ENCODE measurements at regions of chr9 and their contacts with region 1.

Region 1: DNA sequence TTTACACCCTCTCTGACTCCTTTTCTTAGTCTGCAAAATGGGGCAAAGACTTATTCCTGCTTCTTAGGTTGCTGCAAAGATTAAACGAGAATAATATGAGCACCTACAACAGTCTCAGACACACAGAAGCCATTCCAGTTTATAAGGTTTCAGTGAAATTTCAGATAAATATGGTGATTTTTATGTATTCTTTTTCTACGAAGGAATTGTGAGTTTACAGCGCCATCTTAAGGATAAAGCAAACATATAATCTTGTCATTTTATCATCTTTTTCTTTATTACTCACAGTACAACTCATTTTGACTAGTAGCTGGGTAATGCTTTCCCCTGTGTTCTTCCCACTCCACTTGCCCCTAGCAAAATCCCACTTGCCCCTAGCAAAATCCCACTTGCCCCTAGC is 29.2 kb upstream of the SMC5 start:
- DNase-seq: no peak
- H3K4me3 ChIP-seq: no peak overlapping the region
- H3K27ac ChIP-seq: no peak overlapping the region; a peak in 1 of 4 replicates
- H3K4me1 ChIP-seq: no peaks in the 10 kb centered on the region
- H3K27me3 ChIP-seq: no peaks in the 10 kb centered on the region
- CTCF ChIP-seq: peak; percentile 67
- EP300 ChIP-seq: no peak
- RAD21 ChIP-seq: peak; percentile 70

Region 2: DNA sequence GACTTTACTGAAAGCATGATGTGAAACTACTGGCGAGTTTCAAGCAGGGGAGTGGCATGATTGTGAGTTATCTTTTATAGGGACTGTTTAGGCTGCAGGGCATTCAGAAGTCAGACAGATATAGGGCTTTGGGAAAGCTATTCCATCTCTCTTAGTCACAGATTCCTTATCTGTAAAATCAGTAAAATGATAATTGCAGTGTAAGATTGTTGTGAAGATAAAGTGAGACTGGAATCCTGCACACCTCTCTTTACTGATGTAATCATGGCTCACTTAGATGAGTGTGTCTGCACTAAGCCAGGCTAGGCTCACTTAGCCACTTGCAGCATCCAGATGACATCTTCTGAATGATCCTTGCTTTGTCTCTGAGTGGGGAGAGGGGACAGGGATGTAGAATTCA is 267.7 kb before region 1 on chr9:
- CTCF ChIA-PET with region 1: interaction called, 10 read pairs
- POLR2A ChIA-PET with region 1: no interaction called
- DNase-seq: peak; percentile 13
- H3K4me3 ChIP-seq: no peak overlapping the region
- H3K27ac ChIP-seq: no peak overlapping the region
- H3K4me1 ChIP-seq: peaks cover 0 to 6% of the 10 kb centered on the region in 2 experiments; a peak in 2 of 4 replicates
- H3K27me3 ChIP-seq: no peaks in the 10 kb centered on the region
- CTCF ChIP-seq: no peak
- EP300 ChIP-seq: no peak
- RAD21 ChIP-seq: no peak

Region 3: DNA sequence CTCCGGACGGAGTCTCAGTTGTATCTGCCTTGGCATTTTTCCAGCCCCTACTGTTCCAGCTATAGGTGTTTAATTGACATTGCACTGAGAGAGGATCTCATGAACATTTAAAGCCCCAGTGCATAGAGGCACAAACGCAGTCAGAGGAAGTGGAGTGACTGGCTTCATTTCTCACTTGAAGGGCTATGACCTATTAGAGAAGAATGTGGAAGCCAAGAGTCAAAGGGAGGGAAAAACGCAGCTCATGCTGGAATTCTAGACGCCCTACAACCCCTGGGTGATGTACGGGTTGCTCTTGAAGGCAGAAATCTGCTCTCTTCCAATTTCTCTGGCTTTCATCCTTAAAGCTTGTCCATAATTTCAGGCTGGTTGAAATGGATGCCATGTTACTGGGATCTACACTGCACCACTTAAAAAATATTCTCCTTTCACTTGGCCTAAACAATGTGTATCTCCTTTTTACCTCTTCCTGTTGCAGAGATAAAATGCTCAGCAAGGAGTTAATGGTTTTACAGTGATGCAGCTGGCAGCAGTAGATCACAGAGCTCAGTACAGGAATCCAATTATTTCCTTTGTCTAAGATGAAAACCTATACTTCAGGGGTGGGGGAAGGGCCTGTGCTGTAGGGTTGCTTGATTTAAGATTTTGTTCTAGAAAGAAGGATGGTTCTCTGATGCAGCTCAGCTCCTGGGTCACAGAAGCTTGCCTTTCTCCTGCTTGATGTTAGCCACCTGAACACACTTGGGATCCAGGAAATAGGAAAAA is 247.7 kb before region 1 on chr9:
- CTCF ChIA-PET with region 1: interaction called, 12 read pairs
- POLR2A ChIA-PET with region 1: no interaction called
- DNase-seq: no peak
- H3K4me3 ChIP-seq: no peak overlapping the region
- H3K27ac ChIP-seq: peak overlapping the region in 1 of 2 experiments; percentile 51; a peak in 2 of 4 replicates
- H3K4me1 ChIP-seq: peaks cover 3 to 14% of the 10 kb centered on the region in 2 experiments; a peak in 3 of 4 replicates
- H3K27me3 ChIP-seq: no peaks in the 10 kb centered on the region
- CTCF ChIP-seq: no peak
- EP300 ChIP-seq: no peak
- RAD21 ChIP-seq: no peak

Region 4: DNA sequence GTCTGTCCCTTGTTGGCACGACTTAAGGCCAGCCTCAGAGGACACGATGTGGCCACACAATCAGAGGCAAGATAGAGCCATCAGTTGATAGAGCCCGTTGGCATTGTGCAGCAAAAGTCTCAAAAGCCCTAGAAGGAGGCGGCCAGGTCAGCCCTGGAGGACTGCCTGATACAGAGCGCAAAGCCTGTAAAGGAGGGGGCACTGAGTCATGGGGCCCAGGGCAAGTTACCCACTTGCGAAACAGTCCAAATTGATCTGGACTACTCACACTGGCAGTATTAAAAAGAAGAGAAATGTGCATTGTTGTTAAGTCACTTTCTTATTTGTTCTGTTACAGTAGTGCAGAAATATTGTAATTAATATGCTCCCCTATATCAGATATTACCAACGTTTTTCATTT is 133.4 kb after region 1 on chr9:
- CTCF ChIA-PET with region 1: no interaction called
- POLR2A ChIA-PET with region 1: no interaction called
- DNase-seq: no peak
- H3K4me3 ChIP-seq: no peak overlapping the region
- H3K27ac ChIP-seq: no peak overlapping the region
- H3K4me1 ChIP-seq: no peaks in the 10 kb centered on the region
- H3K27me3 ChIP-seq: no peaks in the 10 kb centered on the region
- CTCF ChIP-seq: no peak
- EP300 ChIP-seq: no peak
- RAD21 ChIP-seq: no peak